KBM-7 (cell line): ENCODE measurements at regions of chr18 and their contacts with region 1.

Region 1: DNA sequence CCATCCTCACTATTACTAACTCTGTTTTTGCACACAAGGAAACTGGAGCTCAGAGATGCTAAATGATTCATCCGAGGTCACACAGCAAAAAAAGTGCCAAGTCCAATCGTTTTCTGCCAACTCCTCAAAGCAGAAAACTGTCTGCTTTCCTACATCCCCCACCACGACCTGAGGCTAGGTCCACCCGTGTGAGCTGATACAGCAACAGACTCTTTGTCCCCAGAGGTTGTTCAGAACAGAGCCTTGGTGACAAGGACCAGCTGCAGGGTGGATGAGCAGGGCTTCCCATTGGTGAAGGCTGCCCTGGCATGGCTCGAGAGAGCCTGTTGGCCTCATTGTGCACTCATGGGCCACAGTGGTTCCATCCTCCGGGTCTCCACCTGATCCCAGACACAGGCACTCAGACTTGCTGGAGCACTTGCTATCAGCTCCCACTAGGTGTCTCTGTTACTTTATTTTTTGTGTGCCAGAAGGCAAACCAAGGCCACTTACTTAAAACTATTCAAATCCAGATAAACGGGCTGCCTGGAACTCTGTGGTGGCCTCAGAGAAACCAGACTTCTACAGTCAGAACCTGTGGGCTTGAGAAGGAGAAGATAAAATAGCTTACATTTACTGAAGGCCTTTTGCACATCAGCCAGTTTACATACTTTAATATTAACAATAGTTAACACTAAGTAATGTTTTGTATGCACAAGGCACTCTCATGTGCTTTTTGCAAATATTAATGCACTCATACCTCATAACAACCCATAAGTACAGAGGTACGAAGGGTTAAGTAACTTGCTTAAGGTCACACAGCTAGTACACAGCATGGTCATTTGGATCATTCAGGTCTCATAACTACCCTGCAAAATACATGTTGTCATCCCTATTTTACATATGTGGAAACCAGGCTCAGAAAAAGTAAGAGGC is 62.9 kb upstream of the CTIF start:
- DNase-seq: peak; percentile 75

Region 2: GRCh38 chr18:48663931-48664847 is 188.3 kb after region 1 on chr18:
- in situ Hi-C with region 1: loop called (anchors 10 kb)
- DNase-seq: peak; percentile 57

Region 3: GRCh38 chr18:48719974-48720654 is 244.2 kb after region 1 on chr18:
- in situ Hi-C with region 1: no loop called
- DNase-seq: peak; percentile 84